ENCODE measurements at regions of chr3 and their contacts with region 1.

Region 1: GRCh38 chr3:152241142-152242017 is 27.3 kb upstream of the MBNL1 start:
- DNase-seq: peak in 2 of 4 experiments; percentile 22 to 65
- ATAC-seq: no peak
- H3K4me3 ChIP-seq: no peak overlapping the region
- H3K27ac ChIP-seq: peak overlapping the region; percentile 92
- H3K4me1 ChIP-seq: peaks cover 13 to 34% of the 10 kb centered on the region in 2 experiments
- H3K27me3 ChIP-seq: no peaks in the 10 kb centered on the region
- CTCF ChIP-seq: no peak
- EP300 ChIP-seq: peak; percentile 73
- POLR2A ChIP-seq: no peak
- RAD21 ChIP-seq: no peak

Region 2: DNA sequence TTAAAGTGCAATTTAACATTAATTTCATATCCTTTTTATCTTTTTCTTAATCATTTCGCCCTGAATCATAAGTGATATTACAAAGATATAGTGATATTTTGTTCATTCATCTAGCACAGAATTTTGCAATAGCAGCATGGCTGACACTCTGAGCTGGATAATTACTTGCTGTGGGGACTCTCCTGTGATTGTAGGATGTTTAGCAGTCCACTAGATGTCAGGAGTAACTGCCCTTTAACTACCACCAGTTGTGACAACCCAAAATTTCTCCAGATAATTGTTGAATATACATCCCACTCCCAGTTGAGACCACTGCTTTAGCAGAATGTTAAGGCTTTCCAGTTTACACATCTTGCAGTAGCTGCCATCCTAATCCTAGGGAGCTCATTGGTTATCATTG is 169.5 kb before region 1 on chr3:
- CTCF ChIA-PET with region 1: no interaction called
- POLR2A ChIA-PET with region 1: no interaction called
- in situ Hi-C with region 1: no loop called
- intact Hi-C with region 1: loop called (anchors 10 kb)
- DNase-seq: peak in 2 of 4 experiments; percentile 46 to 50
- ATAC-seq: peak; percentile 97
- H3K4me3 ChIP-seq: no peak overlapping the region
- H3K27ac ChIP-seq: no peak overlapping the region
- H3K4me1 ChIP-seq: no peaks in the 10 kb centered on the region
- H3K27me3 ChIP-seq: no peaks in the 10 kb centered on the region
- CTCF ChIP-seq: peak; percentile 51 to 61 (median 57)
- EP300 ChIP-seq: no peak
- POLR2A ChIP-seq: no peak
- RAD21 ChIP-seq: peak; percentile 26 to 78; a peak in 3 of 4 replicates

Region 3: DNA sequence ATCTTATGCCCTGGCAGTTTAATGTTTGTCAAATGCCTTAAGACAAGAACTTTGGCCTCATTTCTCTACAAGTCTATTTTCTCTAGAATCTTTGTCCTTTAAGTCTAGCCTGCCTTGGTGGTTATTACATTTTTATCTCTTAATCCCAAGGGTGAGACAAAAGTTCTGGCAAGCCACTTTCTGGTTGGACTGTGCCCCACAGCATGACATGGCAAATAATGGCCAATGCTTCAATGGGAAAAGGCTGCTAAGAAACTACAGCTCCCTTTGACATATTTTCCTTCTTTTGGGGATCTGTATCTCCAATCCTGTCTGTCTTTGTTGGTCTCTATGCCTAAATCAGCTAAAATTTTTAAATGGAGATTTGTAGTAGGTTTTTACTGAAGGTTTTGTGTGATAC is 154.2 kb before region 1 on chr3:
- CTCF ChIA-PET with region 1: no interaction called
- POLR2A ChIA-PET with region 1: no interaction called
- in situ Hi-C with region 1: no loop called
- intact Hi-C with region 1: no loop called
- DNase-seq: peak in 2 of 4 experiments; percentile 13 to 27
- ATAC-seq: peak; percentile 40; the same call in 2 of the 3 replicates
- H3K4me3 ChIP-seq: no peak overlapping the region
- H3K27ac ChIP-seq: no peak overlapping the region
- H3K4me1 ChIP-seq: no peaks in the 10 kb centered on the region
- H3K27me3 ChIP-seq: no peaks in the 10 kb centered on the region
- CTCF ChIP-seq: no peak
- EP300 ChIP-seq: no peak
- POLR2A ChIP-seq: no peak
- RAD21 ChIP-seq: no peak

Region 4: GRCh38 chr3:152183473-152183872 is 57.9 kb before region 1 on chr3:
- CTCF ChIA-PET with region 1: interaction called, 3 read pairs
- POLR2A ChIA-PET with region 1: no interaction called
- in situ Hi-C with region 1: no loop called
- intact Hi-C with region 1: loop called (anchors 1 kb)
- DNase-seq: peak; percentile 51 to 88 (median 63)
- ATAC-seq: peak; percentile 97
- H3K4me3 ChIP-seq: no peak overlapping the region
- H3K27ac ChIP-seq: no peak overlapping the region
- H3K4me1 ChIP-seq: peaks cover 0 to 10% of the 10 kb centered on the region in 2 experiments; a peak in 2 of 5 replicates
- H3K27me3 ChIP-seq: no peaks in the 10 kb centered on the region
- CTCF ChIP-seq: peak; percentile 73 to 84 (median 78)
- EP300 ChIP-seq: no peak
- POLR2A ChIP-seq: no peak
- RAD21 ChIP-seq: peak; percentile 83 to 94

Region 5: DNA sequence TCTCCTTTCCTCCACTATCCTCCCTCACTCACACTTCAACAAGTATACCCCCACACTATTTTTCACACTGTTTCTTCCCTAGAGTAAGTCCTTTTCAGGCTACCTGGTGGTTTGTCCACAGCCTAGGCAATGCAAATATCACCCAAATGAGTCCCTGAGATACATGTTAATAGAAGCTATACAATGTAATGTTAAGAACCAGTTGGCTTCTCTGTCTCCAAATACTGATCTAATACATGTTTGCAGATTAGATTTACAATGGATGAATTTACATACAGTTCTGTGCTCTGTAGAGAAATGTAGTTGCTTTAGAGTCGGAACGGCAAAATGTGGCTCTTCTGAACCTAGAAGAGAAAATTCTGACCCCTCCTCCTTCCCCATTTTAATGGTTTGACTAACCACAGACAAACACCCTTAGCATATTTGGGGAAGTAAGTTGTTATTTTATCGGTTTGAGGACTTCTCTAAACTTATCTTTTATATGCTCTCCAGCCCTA is 36.2 kb before region 1 on chr3:
- CTCF ChIA-PET with region 1: interaction called, 3 read pairs
- POLR2A ChIA-PET with region 1: interaction called, 13 read pairs
- in situ Hi-C with region 1: no loop called
- intact Hi-C with region 1: loop called (anchors 1 kb)
- DNase-seq: peak in 1 of 4 experiments; percentile 61
- ATAC-seq: peak; percentile 68
- H3K4me3 ChIP-seq: peak overlapping the region; percentile 36
- H3K27ac ChIP-seq: peak overlapping the region; percentile 84
- H3K4me1 ChIP-seq: peaks cover 8 to 20% of the 10 kb centered on the region in 2 experiments
- H3K27me3 ChIP-seq: no peaks in the 10 kb centered on the region
- CTCF ChIP-seq: no peak
- EP300 ChIP-seq: peak; percentile 48; the same call in 1 of the 2 replicates
- POLR2A ChIP-seq: no peak
- RAD21 ChIP-seq: no peak

Region 6: GRCh38 chr3:152257563-152258035 is 16.2 kb after region 1 on chr3:
- CTCF ChIA-PET with region 1: no interaction called
- POLR2A ChIA-PET with region 1: interaction called, 17 read pairs
- in situ Hi-C with region 1: no loop called
- intact Hi-C with region 1: no loop called
- DNase-seq: no peak
- ATAC-seq: no peak
- H3K4me3 ChIP-seq: no peak overlapping the region
- H3K27ac ChIP-seq: peak overlapping the region; percentile 33; the same call in 1 of the 3 replicates
- H3K4me1 ChIP-seq: peaks cover 5 to 42% of the 10 kb centered on the region in 2 experiments
- H3K27me3 ChIP-seq: no peaks in the 10 kb centered on the region
- CTCF ChIP-seq: no peak
- EP300 ChIP-seq: no peak
- POLR2A ChIP-seq: no peak
- RAD21 ChIP-seq: no peak

Region 7: GRCh38 chr3:152315623-152316022 is 74.2 kb after region 1 on chr3:
- CTCF ChIA-PET with region 1: no interaction called
- POLR2A ChIA-PET with region 1: interaction called, 11 read pairs
- in situ Hi-C with region 1: no loop called
- intact Hi-C with region 1: loop called (anchors 1 kb)
- DNase-seq: no peak
- ATAC-seq: no peak
- H3K4me3 ChIP-seq: no peak overlapping the region
- H3K27ac ChIP-seq: peak overlapping the region; percentile 55; the same call in 2 of the 3 replicates
- H3K4me1 ChIP-seq: peaks cover 0 to 31% of the 10 kb centered on the region in 2 experiments; a peak in 2 of 5 replicates
- H3K27me3 ChIP-seq: no peaks in the 10 kb centered on the region
- CTCF ChIP-seq: no peak
- EP300 ChIP-seq: no peak
- POLR2A ChIP-seq: no peak
- RAD21 ChIP-seq: no peak

Region 8: GRCh38 chr3:152322756-152323155 is 81.4 kb after region 1 on chr3:
- CTCF ChIA-PET with region 1: no interaction called
- POLR2A ChIA-PET with region 1: no interaction called
- in situ Hi-C with region 1: no loop called
- intact Hi-C with region 1: loop called (anchors 1 kb)
- DNase-seq: no peak
- ATAC-seq: no peak
- H3K4me3 ChIP-seq: no peak overlapping the region
- H3K27ac ChIP-seq: peak overlapping the region; percentile 20; the same call in 1 of the 3 replicates
- H3K4me1 ChIP-seq: peaks cover 12 to 47% of the 10 kb centered on the region in 2 experiments
- H3K27me3 ChIP-seq: no peaks in the 10 kb centered on the region
- CTCF ChIP-seq: no peak
- EP300 ChIP-seq: no peak
- POLR2A ChIP-seq: no peak
- RAD21 ChIP-seq: no peak